ENCODE measurements at regions of chr2 and their contacts with region 1.

Region 1: DNA sequence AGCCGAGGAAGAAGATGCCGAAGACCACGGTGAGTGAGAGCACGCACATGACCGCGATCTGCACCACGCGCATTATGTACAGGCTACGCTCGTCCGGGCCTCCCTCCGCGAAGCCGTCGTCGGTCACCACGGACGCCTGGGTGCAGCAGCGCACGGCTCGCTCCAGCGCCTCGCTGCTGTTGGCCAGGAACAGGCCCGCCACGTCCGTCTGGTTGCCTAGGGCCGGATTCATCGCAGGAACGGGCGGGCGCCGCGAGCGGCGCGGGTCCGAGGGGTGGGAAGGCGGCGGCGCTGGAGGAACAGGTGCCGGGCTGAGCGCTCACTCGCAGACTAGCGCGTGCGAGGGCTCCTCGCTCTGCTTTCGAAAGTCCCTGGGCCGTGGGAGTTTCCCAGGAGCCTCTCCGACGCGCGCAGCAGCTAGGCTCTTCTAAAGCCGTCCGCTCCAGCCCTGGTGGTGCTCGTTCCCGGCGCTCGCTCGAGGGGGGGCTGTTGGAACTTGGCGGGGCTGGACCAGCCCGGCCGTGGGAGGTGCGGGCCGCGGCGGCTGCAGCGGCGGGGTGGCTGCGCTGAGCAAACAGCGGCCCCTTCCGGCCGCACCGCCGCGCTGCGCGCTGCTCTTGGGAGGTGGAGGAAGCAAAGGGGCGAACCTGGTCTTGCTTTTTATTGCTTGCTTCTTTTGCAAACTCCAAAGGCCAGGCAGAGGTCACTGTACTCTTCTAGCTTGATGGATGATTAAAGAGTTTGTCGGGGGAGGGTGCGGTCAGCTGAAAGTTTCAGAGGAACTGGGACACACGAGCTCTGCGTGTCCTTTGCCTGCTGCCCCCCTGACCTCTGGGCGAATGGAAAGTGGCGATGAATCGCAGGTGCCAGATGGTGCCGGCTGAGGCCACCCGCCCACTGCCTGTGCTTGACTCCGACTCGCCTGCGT is at the start of gene RPRM:
- DNase-seq: peak; percentile 93
- H3K4me3 ChIP-seq: peak within 1 kb of the TSS; percentile 56 to 68 (median 60)
- H3K27ac ChIP-seq: peak within 1 kb of the TSS; percentile 79 to 82 (median 80)
- H3K4me1 ChIP-seq: peaks cover 0 to 45% (median 33%) of the 10 kb centered on the region in 4 donors
- H3K27me3 ChIP-seq: peaks cover 0 to 4% (median 0%) of the 10 kb centered on the region in 3 donors
- CTCF ChIP-seq: peak; percentile 28 to 85 (median 72)
- EP300 ChIP-seq: no peak
- POLR2A ChIP-seq: no peak
- total RNA-seq, gene RPRM: 17.4 to 35.7 (median 27.3) TPM

Region 2: GRCh38 chr2:152717228-152718075 is 761.1 kb before region 1 on chr2 and contains the start of gene PRPF40A:
- intact Hi-C with region 1: loop called (anchors 10 kb)
- DNase-seq: peak; percentile 99
- H3K4me3 ChIP-seq: peak within 1 kb of the TSS; percentile 87 to 94 (median 94)
- H3K27ac ChIP-seq: peak within 1 kb of the TSS; percentile 96 to 98 (median 97)
- H3K4me1 ChIP-seq: peaks cover 0 to 47% (median 36%) of the 10 kb centered on the region in 4 donors
- H3K27me3 ChIP-seq: no peaks in the 10 kb centered on the region
- CTCF ChIP-seq: no peak
- EP300 ChIP-seq: no peak
- POLR2A ChIP-seq: peak; percentile 76 to 85
- total RNA-seq, gene PRPF40A: 69.2 to 200 (median 80.7) TPM

Region 3: DNA sequence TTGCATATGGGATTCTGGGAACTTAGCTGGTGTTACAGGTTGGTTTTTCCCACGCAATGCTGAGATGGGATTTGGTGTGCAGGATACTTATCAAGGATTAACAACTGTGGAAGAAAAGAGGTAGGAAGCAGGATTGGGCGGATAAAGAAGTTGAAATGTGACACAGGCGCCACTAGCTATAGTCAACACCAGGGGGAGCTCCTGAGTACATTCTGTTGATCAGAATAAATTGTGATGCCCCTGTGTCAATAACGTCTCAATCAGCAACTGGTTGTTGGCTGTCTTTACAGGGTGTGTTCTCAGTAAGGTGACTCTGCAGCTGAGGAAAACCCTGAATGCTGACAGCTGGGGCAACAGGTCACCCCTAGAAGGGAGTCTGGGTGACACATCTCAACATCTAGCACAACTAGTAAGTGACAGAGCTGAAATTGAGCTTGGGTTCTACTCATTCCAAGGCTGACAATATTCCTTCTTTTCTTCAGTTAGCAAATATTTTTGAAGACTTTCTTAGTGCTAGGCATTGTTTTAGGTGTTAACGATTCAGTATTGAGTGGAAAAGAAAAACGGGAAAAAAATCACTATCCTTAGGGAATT is 617.2 kb before region 1 on chr2:
- intact Hi-C with region 1: loop called (anchors 1 kb)
- DNase-seq: no peak
- H3K4me3 ChIP-seq: no peak overlapping the region
- H3K27ac ChIP-seq: no peak overlapping the region
- H3K4me1 ChIP-seq: no peaks in the 10 kb centered on the region
- H3K27me3 ChIP-seq: no peaks in the 10 kb centered on the region
- CTCF ChIP-seq: peak; percentile 10 to 69 (median 42)
- EP300 ChIP-seq: no peak
- POLR2A ChIP-seq: no peak

Region 4: GRCh38 chr2:153163058-153163457 is 315.5 kb before region 1 on chr2:
- intact Hi-C with region 1: loop called (anchors 2 kb)
- DNase-seq: no peak
- H3K4me3 ChIP-seq: no peak overlapping the region
- H3K27ac ChIP-seq: no peak overlapping the region
- H3K4me1 ChIP-seq: peaks cover 0 to under 1% (median 0%) of the 10 kb centered on the region in 4 donors
- H3K27me3 ChIP-seq: no peaks in the 10 kb centered on the region
- CTCF ChIP-seq: peak; percentile 37 to 54 (median 48)
- EP300 ChIP-seq: no peak
- POLR2A ChIP-seq: no peak

Region 5: DNA sequence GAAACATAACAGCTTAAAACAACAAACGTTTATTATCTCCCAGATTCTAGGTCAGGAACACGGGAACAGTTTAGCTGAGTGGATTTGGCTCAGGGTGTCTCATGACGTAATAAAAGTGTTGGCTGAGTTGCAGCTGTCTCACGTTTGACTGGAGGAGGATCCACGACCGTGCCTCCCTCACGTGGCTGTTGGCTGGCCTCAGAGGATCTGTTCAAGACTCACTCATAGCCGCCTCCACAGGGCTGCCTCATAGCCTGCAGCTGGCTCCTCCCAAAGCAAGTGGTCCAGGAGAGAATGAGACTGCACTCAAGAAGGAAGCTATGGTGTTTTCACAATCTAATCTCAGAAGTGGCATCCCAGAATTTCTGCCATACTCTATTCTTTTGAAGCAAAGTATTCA is 167.2 kb before region 1 on chr2:
- intact Hi-C with region 1: loop called (anchors 5 kb)
- DNase-seq: peak; percentile 85
- H3K4me3 ChIP-seq: no peak overlapping the region
- H3K27ac ChIP-seq: no peak overlapping the region
- H3K4me1 ChIP-seq: peaks cover 0 to 9% (median 0%) of the 10 kb centered on the region in 4 donors
- H3K27me3 ChIP-seq: no peaks in the 10 kb centered on the region
- CTCF ChIP-seq: no peak
- EP300 ChIP-seq: no peak
- POLR2A ChIP-seq: no peak

Region 6: DNA sequence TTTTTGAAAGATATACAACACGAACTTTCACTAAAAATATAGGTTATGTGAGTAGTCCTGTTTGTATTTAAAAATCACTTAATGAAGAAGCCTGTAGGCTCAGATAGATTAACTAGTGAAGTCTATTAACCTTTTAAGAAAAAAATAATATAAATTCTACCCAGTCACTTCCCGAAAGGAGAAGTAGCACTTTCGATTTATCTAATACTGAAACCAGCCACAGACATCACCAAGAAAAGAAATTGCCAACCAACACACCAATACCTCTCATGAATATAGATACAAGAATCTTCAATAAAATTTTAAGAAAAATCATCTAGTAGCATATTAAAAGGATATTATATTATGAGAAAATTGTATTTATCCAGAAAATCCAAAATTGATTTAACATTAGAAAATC is 553.6 kb after region 1 on chr2:
- intact Hi-C with region 1: no loop called
- DNase-seq: no peak
- H3K4me3 ChIP-seq: no peak overlapping the region
- H3K27ac ChIP-seq: no peak overlapping the region
- H3K4me1 ChIP-seq: no peaks in the 10 kb centered on the region
- H3K27me3 ChIP-seq: no peaks in the 10 kb centered on the region
- CTCF ChIP-seq: no peak
- EP300 ChIP-seq: no peak
- POLR2A ChIP-seq: no peak